ENCODE measurements at regions of chr6 and their contacts with region 1.

Region 1: GRCh38 chr6:113858480-113859348 is 1.6 kb downstream of the MARCKS start:
- DNase-seq: peak; percentile 90 to 94
- H3K4me3 ChIP-seq: peak overlapping the region; percentile 100
- H3K27ac ChIP-seq: peak overlapping the region; percentile 98
- H3K4me1 ChIP-seq: peaks cover 37% of the 10 kb centered on the region
- H3K27me3 ChIP-seq: no peaks in the 10 kb centered on the region
- CTCF ChIP-seq: peak; percentile 97

Region 2: DNA sequence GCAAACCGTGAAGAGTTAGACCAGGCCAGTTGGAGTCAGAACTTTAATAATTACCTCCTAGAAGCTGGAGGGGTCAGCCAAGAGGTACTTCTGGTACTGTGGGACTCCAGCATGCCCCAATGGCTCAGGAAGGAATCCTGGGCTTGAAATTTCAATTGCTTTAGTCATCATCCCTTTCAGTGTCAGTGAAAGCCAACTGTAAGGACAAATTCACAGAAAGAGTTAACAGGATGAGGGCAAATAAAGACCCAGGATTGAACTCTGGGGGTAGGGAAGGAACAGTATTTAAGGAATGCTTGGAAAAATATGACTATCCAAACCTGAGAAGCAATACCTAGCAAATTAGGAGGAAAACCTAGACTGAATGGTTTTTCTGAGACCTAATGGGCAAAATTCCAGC is 736.7 kb before region 1 on chr6:
- CTCF ChIA-PET with region 1: interaction called, 20 read pairs
- POLR2A ChIA-PET with region 1: interaction called, 13 read pairs
- intact Hi-C with region 1: loop called (anchors 1 kb)
- DNase-seq: peak; percentile 62 to 95
- H3K4me3 ChIP-seq: peak overlapping the region; percentile 6; the same call in 1 of the 2 replicates
- H3K27ac ChIP-seq: peak overlapping the region; percentile 93
- H3K4me1 ChIP-seq: peaks cover 57% of the 10 kb centered on the region
- H3K27me3 ChIP-seq: no peaks in the 10 kb centered on the region
- CTCF ChIP-seq: peak; percentile 63

Region 3: DNA sequence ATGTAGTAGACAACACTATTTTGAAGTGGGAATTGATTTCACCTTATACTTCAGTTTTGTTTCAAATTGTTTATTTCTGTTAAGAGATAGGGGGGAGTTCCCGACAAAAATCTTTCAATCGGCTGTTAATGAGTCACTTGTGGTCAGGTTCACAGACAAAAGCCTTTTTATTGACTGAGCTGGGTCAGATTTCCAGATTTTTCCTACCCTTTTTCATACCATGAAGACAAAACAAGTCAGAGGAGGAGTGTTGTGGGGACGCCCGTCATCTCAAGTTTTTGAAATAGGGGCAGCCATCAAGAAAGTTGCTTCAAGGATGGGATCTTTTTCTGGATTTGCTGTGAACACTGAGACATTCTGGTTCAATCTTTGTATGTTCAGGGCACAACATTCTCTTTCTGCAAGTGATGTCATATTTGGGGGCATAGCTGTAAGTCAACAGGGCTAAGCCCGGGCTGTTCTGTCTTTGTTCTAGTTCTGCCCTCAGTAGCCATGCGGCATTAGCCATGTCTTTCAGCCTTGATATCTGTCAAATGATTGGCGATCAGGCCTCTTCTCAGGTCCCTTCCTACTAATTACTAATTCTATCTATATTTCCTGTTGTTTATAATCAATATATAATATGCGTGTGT is 497.6 kb before region 1 on chr6:
- CTCF ChIA-PET with region 1: interaction called, 3 read pairs
- POLR2A ChIA-PET with region 1: no interaction called
- intact Hi-C with region 1: loop called (anchors 1 kb)
- DNase-seq: peak in 1 of 2 experiments; percentile 59
- H3K4me3 ChIP-seq: no peak overlapping the region
- H3K27ac ChIP-seq: 0 out of 2 replicates have a peak overlapping the region, but pooled peaks have one; percentile 2
- H3K4me1 ChIP-seq: peaks cover 37% of the 10 kb centered on the region
- H3K27me3 ChIP-seq: no peaks in the 10 kb centered on the region
- CTCF ChIP-seq: no peak

Region 4: GRCh38 chr6:113433335-113433991 is 425.3 kb before region 1 on chr6:
- CTCF ChIA-PET with region 1: no interaction called
- POLR2A ChIA-PET with region 1: no interaction called
- intact Hi-C with region 1: loop called (anchors 1 kb)
- DNase-seq: peak; percentile 61 to 99
- H3K4me3 ChIP-seq: peak overlapping the region; percentile 16; the same call in 1 of the 2 replicates
- H3K27ac ChIP-seq: peak overlapping the region; percentile 87
- H3K4me1 ChIP-seq: peaks cover 48% of the 10 kb centered on the region
- H3K27me3 ChIP-seq: no peaks in the 10 kb centered on the region
- CTCF ChIP-seq: no peak

Region 5: GRCh38 chr6:113632220-113632864 is 226.4 kb before region 1 on chr6:
- CTCF ChIA-PET with region 1: interaction called, 3 read pairs
- POLR2A ChIA-PET with region 1: no interaction called
- intact Hi-C with region 1: loop called (anchors 1 kb)
- DNase-seq: peak; percentile 74 to 100
- H3K4me3 ChIP-seq: peak overlapping the region; percentile 27; the same call in 1 of the 2 replicates
- H3K27ac ChIP-seq: peak overlapping the region; percentile 99
- H3K4me1 ChIP-seq: peaks cover 68% of the 10 kb centered on the region
- H3K27me3 ChIP-seq: no peaks in the 10 kb centered on the region
- CTCF ChIP-seq: no peak

Region 6: GRCh38 chr6:113763883-113764282 is 94.8 kb before region 1 on chr6:
- CTCF ChIA-PET with region 1: no interaction called
- POLR2A ChIA-PET with region 1: no interaction called
- intact Hi-C with region 1: loop called (anchors 2 kb)
- DNase-seq: peak; percentile 43 to 99
- H3K4me3 ChIP-seq: peak overlapping the region; percentile 18; the same call in 1 of the 2 replicates
- H3K27ac ChIP-seq: peak overlapping the region; percentile 97
- H3K4me1 ChIP-seq: peaks cover 38% of the 10 kb centered on the region
- H3K27me3 ChIP-seq: no peaks in the 10 kb centered on the region
- CTCF ChIP-seq: no peak